ENCODE measurements at regions of chr19 and their contacts with region 1.

Region 1: GRCh38 chr19:49097455-49098288 is 12.4 kb downstream of the SNRNP70 start:
- DNase-seq: peak; percentile 55 to 56
- ATAC-seq: peak; percentile 28 to 79 (median 62)
- H3K4me3 ChIP-seq: no peak overlapping the region
- H3K27ac ChIP-seq: no peak overlapping the region
- H3K4me1 ChIP-seq: peaks cover 7 to 50% (median 17%) of the 10 kb centered on the region in 9 donors
- H3K27me3 ChIP-seq: no peaks in the 10 kb centered on the region
- CTCF ChIP-seq: peak; percentile 97 to 100 (median 99)

Region 2: DNA sequence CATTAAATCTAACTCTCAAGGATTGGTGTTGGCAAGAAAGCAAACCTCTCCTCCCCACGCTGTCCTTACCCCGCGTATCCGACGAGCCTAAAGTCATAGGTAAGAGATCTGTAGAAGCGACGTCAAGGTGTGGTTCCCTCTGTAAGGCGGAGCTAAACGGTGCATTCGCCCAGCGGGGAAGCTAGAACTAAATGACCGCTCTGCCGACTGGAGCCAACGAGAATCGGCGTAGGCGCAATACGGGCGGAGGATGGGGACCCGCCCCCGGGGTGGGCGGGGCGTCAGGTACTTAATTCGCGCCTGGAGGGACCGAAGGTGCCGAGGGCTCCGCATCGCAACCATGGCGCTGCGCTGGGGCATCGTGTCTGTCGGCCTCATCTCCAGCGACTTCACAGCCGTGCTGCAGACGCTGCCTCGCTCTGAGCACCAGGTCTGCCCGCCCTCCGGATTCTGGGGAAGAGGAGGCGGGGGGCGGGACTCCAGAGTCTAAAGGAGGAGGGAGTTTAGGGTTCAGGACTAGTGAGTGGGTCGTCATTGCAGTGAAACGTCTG is 164.2 kb before region 1 on chr19 and contains the start of gene DHDH:
- intact Hi-C with region 1: no loop called
- DNase-seq: peak; percentile 56 to 67
- ATAC-seq: peak; percentile 63 to 85 (median 79)
- H3K4me3 ChIP-seq: peak within 1 kb of the TSS in 9 of 10 donors; percentile 31 to 61 (median 53)
- H3K27ac ChIP-seq: peak within 1 kb of the TSS in 1 of 10 donors; percentile 34
- H3K4me1 ChIP-seq: peaks cover 0 to 15% (median 11%) of the 10 kb centered on the region in 9 donors
- H3K27me3 ChIP-seq: peaks cover 0 to 19% (median 0%) of the 10 kb centered on the region in 7 donors
- CTCF ChIP-seq: peak in 1 of 9 donors; percentile 11
- total RNA-seq, gene DHDH: 0.51 TPM in 1 of 10 donors, not detected in the others

Region 3: GRCh38 chr19:49014123-49014869 is 83.4 kb before region 1 on chr19:
- intact Hi-C with region 1: no loop called
- DNase-seq: no peak
- ATAC-seq: no peak
- H3K4me3 ChIP-seq: no peak overlapping the region
- H3K27ac ChIP-seq: no peak overlapping the region
- H3K4me1 ChIP-seq: peaks cover 0 to 23% (median 18%) of the 10 kb centered on the region in 9 donors
- H3K27me3 ChIP-seq: peaks cover 0 to 20% (median 9%) of the 10 kb centered on the region in 7 donors
- CTCF ChIP-seq: no peak

Region 4: GRCh38 chr19:49142866-49143335 is 45.2 kb after region 1 on chr19:
- intact Hi-C with region 1: loop called in 9 of 10 experiments (anchors 1 to 5 kb)
- DNase-seq: peak; percentile 90 to 95
- ATAC-seq: peak; percentile 90 to 99 (median 96)
- H3K4me3 ChIP-seq: peak overlapping the region in 9 of 10 donors; percentile 43 to 61 (median 55)
- H3K27ac ChIP-seq: peak overlapping the region in 2 of 10 donors; percentile 29 to 35
- H3K4me1 ChIP-seq: peaks cover 7 to 36% (median 17%) of the 10 kb centered on the region in 9 donors
- H3K27me3 ChIP-seq: peaks cover 0 to 12% (median 0%) of the 10 kb centered on the region in 7 donors
- CTCF ChIP-seq: no peak

Region 5: GRCh38 chr19:49210108-49210900 is 112.6 kb after region 1 on chr19:
- intact Hi-C with region 1: loop called in 6 of 10 experiments (anchors 1 to 5 kb)
- DNase-seq: no peak
- ATAC-seq: peak in 4 of 8 donors; percentile 16 to 46 (median 40)
- H3K4me3 ChIP-seq: no peak overlapping the region
- H3K27ac ChIP-seq: peak overlapping the region in 1 of 10 donors; percentile 7
- H3K4me1 ChIP-seq: peaks cover 0 to 21% (median 11%) of the 10 kb centered on the region in 9 donors
- H3K27me3 ChIP-seq: no peaks in the 10 kb centered on the region
- CTCF ChIP-seq: no peak

Measured in heart right ventricle (tissue), 16 donors.